ENCODE measurements at regions of chr12 and their contacts with region 1.

Region 1: GRCh38 chr12:47216150-47216677 is 136.5 kb upstream of the AMIGO2 start:
- DNase-seq: peak; percentile 88
- ATAC-seq: peak; percentile 85
- H3K4me3 ChIP-seq: peak overlapping the region; percentile 56 to 80 (median 60)
- H3K4me3 Mint-ChIP-seq: peak overlapping the region; percentile 90
- H3K27ac ChIP-seq: peak overlapping the region; percentile 78 to 89
- H3K27ac Mint-ChIP-seq: peak overlapping the region; percentile 92
- H3K4me1 ChIP-seq: peaks cover 63 to 73% of the 10 kb centered on the region in 2 donors
- H3K4me1 Mint-ChIP-seq: peaks cover 56% of the 10 kb centered on the region
- H3K27me3 ChIP-seq: no peaks in the 10 kb centered on the region
- H3K27me3 Mint-ChIP-seq: no peaks in the 10 kb centered on the region
- CTCF ChIP-seq: no peak

Region 2: DNA sequence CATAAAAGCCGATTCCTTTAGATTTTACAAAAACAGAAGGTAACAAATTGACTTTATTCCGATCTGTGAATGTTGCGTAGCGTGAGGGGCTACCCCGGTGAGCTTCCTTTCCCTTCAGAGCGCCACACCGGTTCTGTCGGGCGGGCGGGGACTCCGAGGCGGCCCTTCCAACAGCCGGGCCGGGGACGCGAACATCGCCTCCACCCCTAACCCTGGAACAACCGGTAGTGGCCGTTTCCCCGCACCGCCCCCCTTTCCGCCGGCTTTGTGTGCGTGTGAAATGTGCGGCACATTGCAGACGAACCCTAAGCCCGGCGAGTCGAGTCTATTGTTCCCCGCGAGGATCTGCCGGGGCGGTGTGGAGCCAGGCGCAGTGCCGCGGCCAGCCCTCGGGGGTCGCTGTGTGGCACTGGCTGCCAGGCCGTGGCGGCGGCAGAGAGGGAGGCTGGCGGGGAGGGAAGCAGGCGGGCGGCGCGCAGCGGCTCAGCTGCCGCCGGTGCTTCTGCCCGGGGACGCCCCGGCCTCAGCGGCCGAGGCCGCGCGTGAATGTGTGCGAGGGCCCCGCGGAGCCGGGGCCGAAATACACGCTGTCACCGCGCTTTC is 1487.5 kb before region 1 on chr12:
- CTCF ChIA-PET with region 1: no interaction called
- POLR2A ChIA-PET with region 1: no interaction called
- intact Hi-C with region 1: loop called (anchors 10 kb)
- DNase-seq: peak; percentile 98
- ATAC-seq: peak; percentile 68
- H3K4me3 ChIP-seq: peak overlapping the region; percentile 87 to 98 (median 95)
- H3K4me3 Mint-ChIP-seq: peak overlapping the region; percentile 100
- H3K27ac ChIP-seq: peak overlapping the region; percentile 98 to 99
- H3K27ac Mint-ChIP-seq: peak overlapping the region; percentile 99
- H3K4me1 ChIP-seq: peaks cover 16 to 38% of the 10 kb centered on the region in 2 donors
- H3K4me1 Mint-ChIP-seq: peaks cover 36% of the 10 kb centered on the region
- H3K27me3 ChIP-seq: no peaks in the 10 kb centered on the region
- H3K27me3 Mint-ChIP-seq: no peaks in the 10 kb centered on the region
- CTCF ChIP-seq: peak; percentile 93

Region 3: DNA sequence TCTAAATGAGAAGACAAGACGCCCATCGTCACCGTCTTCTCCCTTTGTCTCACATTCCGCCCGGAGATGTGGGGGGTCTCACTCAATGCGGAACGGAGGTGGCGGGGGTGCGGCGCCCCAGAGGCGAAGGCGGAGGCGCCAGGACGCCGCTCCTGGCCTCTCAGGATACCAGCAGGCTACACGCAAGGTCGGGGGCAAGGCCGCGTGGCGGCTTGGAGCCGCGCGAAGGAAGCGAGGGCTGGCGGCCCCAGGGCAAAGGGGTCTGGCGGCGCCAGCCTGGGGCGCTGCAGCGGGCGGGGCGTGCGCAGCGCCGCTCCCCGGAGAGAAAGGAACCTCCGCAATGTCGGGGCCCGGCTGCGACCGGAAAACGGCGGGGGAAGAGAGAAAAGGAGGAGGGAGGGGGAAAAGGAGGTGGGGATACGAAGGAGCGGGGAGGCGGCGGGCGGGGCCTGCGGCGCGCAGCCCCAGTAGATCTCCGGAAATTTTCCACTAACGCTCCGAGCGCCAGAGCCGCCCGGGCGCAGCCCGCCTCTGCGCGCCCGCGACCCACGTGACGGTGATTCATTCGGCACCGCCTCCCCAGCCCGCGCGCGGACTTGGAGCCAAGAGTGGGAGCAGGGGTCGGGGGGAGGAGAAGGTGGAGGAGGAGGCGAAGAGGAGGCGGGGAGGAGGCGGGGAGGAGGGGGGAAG is 833.1 kb before region 1 on chr12:
- CTCF ChIA-PET with region 1: no interaction called
- POLR2A ChIA-PET with region 1: no interaction called
- intact Hi-C with region 1: loop called (anchors 10 kb)
- DNase-seq: peak; percentile 94
- ATAC-seq: peak; percentile 69
- H3K4me3 ChIP-seq: peak overlapping the region; percentile 49 to 94 (median 84)
- H3K4me3 Mint-ChIP-seq: peak overlapping the region; percentile 90
- H3K27ac ChIP-seq: peak overlapping the region; percentile 94 to 97
- H3K27ac Mint-ChIP-seq: peak overlapping the region; percentile 98
- H3K4me1 ChIP-seq: peaks cover 38 to 44% of the 10 kb centered on the region in 2 donors
- H3K4me1 Mint-ChIP-seq: peaks cover 46% of the 10 kb centered on the region
- H3K27me3 ChIP-seq: no peaks in the 10 kb centered on the region
- H3K27me3 Mint-ChIP-seq: no peaks in the 10 kb centered on the region
- CTCF ChIP-seq: no peak

Region 4: DNA sequence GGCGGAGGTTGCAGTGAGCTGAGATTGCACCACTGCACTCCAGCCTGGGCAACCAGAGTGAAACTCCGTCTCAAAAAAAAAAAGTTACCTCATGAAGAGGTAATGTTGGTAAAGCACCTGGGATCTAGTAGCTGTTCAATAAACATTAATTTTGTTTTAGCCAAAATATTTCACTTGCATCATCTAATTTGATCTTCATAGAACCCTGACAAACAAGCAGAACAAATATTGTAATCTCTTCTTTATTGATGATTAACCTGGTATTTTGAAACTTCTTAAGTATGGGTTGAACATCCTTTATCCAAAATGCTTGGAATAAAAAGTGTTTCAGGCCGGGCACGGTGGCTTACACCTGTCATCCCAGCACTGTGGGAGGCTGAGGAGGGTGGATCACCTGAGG is 12.6 kb after region 1 on chr12:
- CTCF ChIA-PET with region 1: interaction called, 10 read pairs
- POLR2A ChIA-PET with region 1: interaction called, 4 read pairs
- intact Hi-C with region 1: no loop called
- DNase-seq: no peak
- ATAC-seq: no peak
- H3K4me3 ChIP-seq: no peak overlapping the region
- H3K4me3 Mint-ChIP-seq: no peak overlapping the region
- H3K27ac ChIP-seq: no peak overlapping the region
- H3K27ac Mint-ChIP-seq: no peak overlapping the region
- H3K4me1 ChIP-seq: peaks cover 11 to 20% of the 10 kb centered on the region in 2 donors
- H3K4me1 Mint-ChIP-seq: peaks cover 52% of the 10 kb centered on the region
- H3K27me3 ChIP-seq: no peaks in the 10 kb centered on the region
- H3K27me3 Mint-ChIP-seq: no peaks in the 10 kb centered on the region
- CTCF ChIP-seq: no peak

Region 5: DNA sequence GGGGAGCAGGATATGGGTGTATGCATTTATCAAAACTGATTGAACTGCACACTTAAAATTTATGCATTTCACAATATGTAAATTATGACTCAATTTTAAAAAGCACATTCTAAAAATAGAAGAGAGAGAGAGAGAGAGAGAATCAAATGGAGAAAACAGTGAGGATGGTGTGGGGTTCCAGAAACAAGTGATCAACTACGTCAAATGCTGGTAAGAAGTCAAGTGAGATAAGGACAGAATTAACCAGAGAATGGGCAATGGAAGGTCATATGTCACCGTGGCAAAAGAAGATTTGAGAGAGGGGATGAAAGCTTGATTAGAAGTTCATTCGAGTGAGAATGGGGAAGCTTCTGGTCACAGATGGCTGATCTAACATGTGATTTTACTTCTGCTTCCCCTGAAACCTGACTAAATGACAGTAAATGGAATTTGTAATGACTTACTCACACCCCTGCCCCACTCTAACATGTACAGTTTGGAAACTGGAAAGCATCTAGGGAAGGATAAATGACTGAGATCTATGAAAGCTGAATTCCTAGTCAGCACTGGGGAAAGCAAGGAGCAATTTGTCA is 140.0 kb after region 1 on chr12:
- CTCF ChIA-PET with region 1: no interaction called
- POLR2A ChIA-PET with region 1: interaction called, 8 read pairs
- intact Hi-C with region 1: loop called (anchors 1 kb)
- DNase-seq: peak; percentile 93
- ATAC-seq: peak; percentile 77
- H3K4me3 ChIP-seq: peak overlapping the region in 1 of 5 experiments; percentile 31
- H3K4me3 Mint-ChIP-seq: peak overlapping the region; percentile 74
- H3K27ac ChIP-seq: peak overlapping the region; percentile 91 to 95
- H3K27ac Mint-ChIP-seq: peak overlapping the region; percentile 98
- H3K4me1 ChIP-seq: peaks cover 71 to 80% of the 10 kb centered on the region in 2 donors
- H3K4me1 Mint-ChIP-seq: peaks cover 78% of the 10 kb centered on the region
- H3K27me3 ChIP-seq: no peaks in the 10 kb centered on the region
- H3K27me3 Mint-ChIP-seq: no peaks in the 10 kb centered on the region
- CTCF ChIP-seq: no peak

Measured in B cell (primary cell).